Activated T-helper 1 cell treated with anti-CD3 and anti-CD28 coated beads, Interleukin-12 subunit alpha, Interleukin-12 subunit beta, Interleukin-2, Interleukin-4 antibody, amounts not matched to agents 30 ng/mL and 10 ng/mL and 1 ng/mL, durations not matched to agents 14 hours and 24 hours and 36 hours (primary cell): ENCODE measurements at regions of chr2 and their contacts with region 1.

Region 1: DNA sequence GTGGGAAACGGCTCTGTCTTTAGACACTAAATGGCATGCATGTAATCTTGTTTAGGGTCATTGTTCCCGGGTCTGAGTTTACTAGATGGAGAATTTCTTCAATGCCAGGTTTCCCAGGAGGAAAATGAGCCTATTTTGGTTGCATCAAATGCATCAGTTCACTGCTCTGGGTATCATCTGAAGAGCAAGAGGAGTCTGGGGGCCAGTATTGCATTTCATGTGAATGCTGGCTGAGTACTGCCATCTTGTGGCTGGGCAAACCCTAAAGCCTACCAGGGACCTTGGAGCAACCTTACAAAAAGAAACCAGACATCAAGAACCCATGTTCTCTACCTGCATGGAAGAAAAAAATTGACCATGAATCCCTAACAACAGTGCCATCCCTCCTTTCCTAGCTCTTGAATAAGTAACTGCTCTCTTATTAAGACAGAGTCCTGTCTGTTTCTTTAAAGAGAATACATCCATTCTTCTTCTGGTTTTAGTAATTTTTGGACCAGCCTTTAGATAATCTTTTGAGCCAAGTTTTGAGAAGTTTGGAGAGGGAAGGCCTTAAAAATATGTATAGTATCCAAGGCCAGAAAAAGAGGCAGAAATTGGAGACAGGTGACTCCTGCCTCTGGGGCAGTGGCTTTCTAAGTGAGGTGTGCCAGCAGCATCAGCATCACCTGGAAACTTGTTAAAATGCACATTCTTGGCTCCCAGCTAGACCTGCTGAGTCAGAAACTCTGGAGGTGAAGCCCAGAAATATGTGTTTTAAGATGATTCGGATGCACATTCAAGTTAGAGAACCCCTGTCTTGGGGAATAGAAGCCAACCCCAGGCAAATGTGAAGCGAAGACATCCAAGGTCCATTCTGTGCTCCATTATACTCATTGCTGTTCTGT is 261.0 kb upstream of the CXCR4 start:
- DNase-seq: peak; percentile 70
- H3K4me3 Mint-ChIP-seq: no peak overlapping the region
- H3K27ac Mint-ChIP-seq: no peak overlapping the region
- H3K4me1 Mint-ChIP-seq: peaks cover 80% of the 10 kb centered on the region
- H3K27me3 Mint-ChIP-seq: no peaks in the 10 kb centered on the region

Region 2: DNA sequence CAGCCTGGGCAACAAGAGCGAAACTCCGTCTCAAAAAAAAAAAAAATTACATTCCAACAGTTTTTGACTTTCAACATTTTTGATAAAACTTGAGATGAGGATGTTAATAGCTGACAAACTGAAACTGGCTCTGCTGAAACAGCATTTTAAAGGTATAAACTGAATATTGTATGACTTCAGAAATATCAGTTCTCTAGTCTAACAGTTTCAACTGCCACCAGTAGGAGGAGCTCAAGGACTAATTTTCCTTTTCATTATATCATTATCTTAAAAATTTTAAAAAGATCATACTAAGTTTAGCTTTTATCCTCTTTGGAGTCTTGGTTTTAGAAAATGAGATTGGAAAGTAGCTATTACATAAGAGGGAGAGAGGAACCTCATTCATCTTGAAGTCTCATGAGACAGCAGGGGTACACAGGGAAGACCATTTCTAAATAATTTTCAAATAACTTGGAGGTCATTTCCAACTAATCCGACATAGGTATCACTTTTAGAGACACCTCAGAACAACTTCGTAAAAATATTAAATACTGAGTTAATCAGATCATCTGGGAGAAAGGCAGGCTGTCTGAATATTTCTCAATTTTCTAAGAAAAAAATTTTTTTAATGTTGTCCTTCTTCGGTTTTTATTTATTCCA is 465.1 kb before region 1 on chr2:
- intact Hi-C with region 1: loop called (anchors 1 kb)
- DNase-seq: no peak
- H3K4me3 Mint-ChIP-seq: no peak overlapping the region
- H3K27ac Mint-ChIP-seq: no peak overlapping the region
- H3K4me1 Mint-ChIP-seq: peaks cover 27% of the 10 kb centered on the region
- H3K27me3 Mint-ChIP-seq: no peaks in the 10 kb centered on the region

Region 3: GRCh38 chr2:136207030-136207623 is 171.8 kb before region 1 on chr2:
- intact Hi-C with region 1: loop called (anchors 1 kb)
- DNase-seq: no peak
- H3K4me3 Mint-ChIP-seq: no peak overlapping the region
- H3K27ac Mint-ChIP-seq: peak overlapping the region; percentile 92
- H3K4me1 Mint-ChIP-seq: peaks cover 33% of the 10 kb centered on the region
- H3K27me3 Mint-ChIP-seq: peaks cover 2% of the 10 kb centered on the region

Region 4: DNA sequence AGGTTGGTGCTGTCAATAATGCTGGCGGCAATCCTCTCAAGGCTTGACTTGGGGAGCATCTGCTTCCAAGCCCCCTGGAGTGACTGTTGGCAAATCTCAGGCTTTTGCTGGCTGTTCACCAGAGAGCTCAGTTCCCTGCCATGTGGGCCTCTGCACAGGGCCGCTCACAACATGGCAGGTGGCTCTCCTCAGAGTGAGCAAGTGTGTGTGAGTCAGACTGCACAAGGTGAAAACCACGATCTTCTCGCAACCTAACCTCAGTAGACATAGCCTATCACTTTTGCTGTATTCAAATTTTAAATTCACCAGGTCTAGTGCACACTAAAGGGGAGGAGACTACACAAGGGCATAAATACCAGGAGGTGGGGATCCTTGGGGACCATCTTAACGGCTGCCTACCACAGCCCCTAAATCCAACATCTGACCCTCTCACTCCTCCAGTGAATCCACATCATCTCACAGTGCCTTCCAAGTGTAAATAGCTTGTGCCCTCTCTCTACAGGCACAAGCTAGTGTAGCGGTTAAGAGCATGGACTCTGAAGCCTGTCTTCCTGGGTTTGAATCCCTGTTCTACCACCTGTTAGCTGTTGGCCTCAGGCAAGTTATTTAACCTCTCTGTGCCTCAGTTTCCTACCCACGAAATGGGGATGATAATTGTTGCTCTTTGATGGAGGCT is 73.3 kb before region 1 on chr2:
- intact Hi-C with region 1: loop called (anchors 1 kb)
- DNase-seq: peak; percentile 47
- H3K4me3 Mint-ChIP-seq: no peak overlapping the region
- H3K27ac Mint-ChIP-seq: peak overlapping the region; percentile 70
- H3K4me1 Mint-ChIP-seq: peaks cover 34% of the 10 kb centered on the region
- H3K27me3 Mint-ChIP-seq: peaks cover 2% of the 10 kb centered on the region

Region 5: GRCh38 chr2:136310797-136311603 is 68.0 kb before region 1 on chr2:
- intact Hi-C with region 1: loop called (anchors 1 kb)
- DNase-seq: no peak
- H3K4me3 Mint-ChIP-seq: peak overlapping the region; percentile 38
- H3K27ac Mint-ChIP-seq: peak overlapping the region; percentile 83
- H3K4me1 Mint-ChIP-seq: peaks cover 38% of the 10 kb centered on the region
- H3K27me3 Mint-ChIP-seq: peaks cover 4% of the 10 kb centered on the region

Region 6: DNA sequence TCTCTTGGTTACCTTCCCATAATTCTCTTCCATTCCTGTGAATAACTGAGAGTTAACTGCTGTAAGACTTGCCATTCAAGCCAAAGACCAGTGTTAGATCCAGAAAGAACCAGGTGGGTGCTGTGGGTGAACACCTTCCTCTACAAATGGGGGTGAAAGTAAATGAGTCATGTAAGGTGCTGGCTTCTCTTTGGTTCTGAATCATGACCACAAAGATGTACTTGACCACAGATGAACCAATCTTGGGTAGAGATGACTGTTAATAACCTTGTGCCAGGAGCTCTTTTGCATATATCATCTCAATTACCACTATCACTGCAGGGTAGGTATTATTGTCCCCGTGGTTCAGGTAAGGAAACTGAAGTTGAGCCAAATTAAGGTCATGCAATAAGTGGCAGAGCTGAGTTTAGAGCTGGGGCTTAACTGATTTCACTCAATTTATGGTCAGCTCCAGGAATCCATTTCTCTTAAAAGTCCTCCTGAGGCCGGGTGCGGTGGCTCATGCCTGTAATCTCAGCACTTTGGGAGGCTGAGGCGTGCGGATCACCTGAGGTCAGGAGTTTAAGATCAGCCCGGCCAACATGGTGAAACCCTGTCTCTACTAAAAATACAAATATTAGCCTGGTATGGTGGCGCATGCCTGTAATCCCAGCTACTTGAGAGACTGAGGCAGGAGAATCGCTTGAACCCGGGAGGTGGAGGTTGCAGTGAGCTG is 16.1 kb before region 1 on chr2:
- intact Hi-C with region 1: loop called (anchors 1 kb)
- DNase-seq: no peak
- H3K4me3 Mint-ChIP-seq: peak overlapping the region; percentile 21
- H3K27ac Mint-ChIP-seq: peak overlapping the region; percentile 69
- H3K4me1 Mint-ChIP-seq: peaks cover 57% of the 10 kb centered on the region
- H3K27me3 Mint-ChIP-seq: peaks cover 4% of the 10 kb centered on the region

Region 7: DNA sequence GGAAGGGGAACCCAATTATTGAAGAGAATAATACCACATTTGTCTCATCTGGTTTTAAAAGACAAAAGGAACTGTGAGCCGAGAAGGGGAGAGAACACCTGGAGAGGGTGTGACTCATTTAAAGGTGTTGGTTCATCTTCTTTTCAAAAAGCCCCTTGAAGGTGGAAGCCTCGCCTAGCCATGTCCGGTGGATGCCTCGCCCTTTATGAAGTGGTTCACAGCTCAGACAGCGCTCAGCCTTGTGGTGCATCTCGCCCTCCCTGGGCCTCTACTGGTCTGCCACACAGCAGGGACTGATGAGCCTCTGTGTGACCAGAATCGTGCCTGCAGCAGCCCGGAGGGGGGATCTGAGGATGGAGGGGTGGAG is 29.0 kb after region 1 on chr2:
- intact Hi-C with region 1: no loop called
- DNase-seq: no peak
- H3K4me3 Mint-ChIP-seq: no peak overlapping the region
- H3K27ac Mint-ChIP-seq: no peak overlapping the region
- H3K4me1 Mint-ChIP-seq: no peaks in the 10 kb centered on the region
- H3K27me3 Mint-ChIP-seq: peaks cover 39% of the 10 kb centered on the region

Region 8: GRCh38 chr2:137091704-137092103 is 712.8 kb after region 1 on chr2:
- intact Hi-C with region 1: no loop called
- DNase-seq: no peak
- H3K4me3 Mint-ChIP-seq: no peak overlapping the region
- H3K27ac Mint-ChIP-seq: no peak overlapping the region
- H3K4me1 Mint-ChIP-seq: no peaks in the 10 kb centered on the region
- H3K27me3 Mint-ChIP-seq: no peaks in the 10 kb centered on the region